ENCODE measurements at regions of chr14 and their contacts with region 1.

Region 1: DNA sequence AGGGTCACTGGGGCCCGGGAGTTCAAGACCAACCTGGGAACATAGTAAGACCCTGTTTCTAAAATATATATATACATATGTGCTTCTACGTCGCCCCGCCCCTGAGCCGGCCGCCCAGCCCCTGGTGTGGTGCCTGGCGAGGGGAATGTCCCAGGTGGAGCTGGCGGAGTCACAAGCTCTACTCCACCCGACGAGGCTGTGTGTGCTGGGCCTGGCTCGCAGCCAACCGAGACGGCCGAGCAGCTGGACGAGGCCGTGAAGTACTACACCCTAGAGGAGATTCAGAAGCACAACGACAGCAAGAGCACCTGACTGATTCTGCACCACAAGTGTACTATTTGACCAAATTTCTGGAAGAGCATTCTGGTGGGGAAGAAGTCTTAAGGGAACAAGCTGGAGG is 22.1 kb upstream of the ITPK1 start:
- DNase-seq: no peak
- H3K4me3 ChIP-seq: no peak overlapping the region
- H3K27ac ChIP-seq: no peak overlapping the region
- H3K4me1 ChIP-seq: no peaks in the 10 kb centered on the region
- H3K27me3 ChIP-seq: no peaks in the 10 kb centered on the region
- CTCF ChIP-seq: no peak
- POLR2A ChIP-seq: no peak

Region 2: DNA sequence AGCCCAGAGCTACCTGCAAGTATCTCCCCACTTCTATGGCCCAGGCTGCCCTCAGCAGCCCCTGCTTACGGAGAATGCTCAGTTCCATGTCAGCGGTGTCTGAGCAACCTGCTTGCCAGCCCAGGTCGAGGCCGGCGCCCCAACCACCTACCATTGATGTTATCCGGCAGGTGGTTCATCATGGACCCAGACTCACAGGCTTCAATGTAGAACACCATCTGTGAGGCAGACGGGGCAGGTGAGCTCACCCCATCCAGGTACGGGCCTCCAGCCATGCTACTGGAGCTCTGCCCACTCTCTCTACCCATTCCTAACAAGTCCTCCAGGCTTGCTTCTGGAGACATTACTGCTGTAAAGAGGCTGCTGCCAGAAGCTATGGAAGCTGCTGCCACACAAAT is 425.2 kb before region 1 on chr14:
- CTCF ChIA-PET with region 1: interaction called, 4 read pairs
- POLR2A ChIA-PET with region 1: no interaction called
- dilution Hi-C with region 1: no loop called
- intact Hi-C with region 1: loop called (anchors 2 kb)
- DNase-seq: no peak
- H3K4me3 ChIP-seq: no peak overlapping the region
- H3K27ac ChIP-seq: no peak overlapping the region
- H3K4me1 ChIP-seq: no peaks in the 10 kb centered on the region
- H3K27me3 ChIP-seq: no peaks in the 10 kb centered on the region
- CTCF ChIP-seq: no peak
- POLR2A ChIP-seq: no peak

Region 3: DNA sequence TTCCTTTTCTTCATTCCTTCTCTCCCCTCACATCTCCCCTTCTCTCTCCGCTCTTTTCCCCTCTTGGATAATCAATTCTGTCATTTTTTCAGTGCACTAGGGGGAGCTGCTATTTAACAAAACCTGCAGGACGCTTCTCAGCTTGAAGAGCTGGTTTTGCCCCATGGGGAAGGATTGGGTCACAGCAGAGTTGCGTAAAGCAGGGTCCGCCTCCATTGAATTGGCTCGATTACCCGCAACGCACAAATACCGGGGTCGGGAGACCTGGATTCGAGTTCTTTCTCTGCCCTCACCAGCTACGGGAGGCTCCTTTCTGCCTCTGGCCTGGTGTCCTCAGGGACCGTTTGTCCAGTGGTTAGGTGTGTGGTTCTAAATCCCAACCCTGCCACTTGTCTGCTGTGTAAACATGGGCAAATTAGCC is 257.0 kb before region 1 on chr14:
- CTCF ChIA-PET with region 1: interaction called, 9 read pairs
- POLR2A ChIA-PET with region 1: no interaction called
- dilution Hi-C with region 1: no loop called
- intact Hi-C with region 1: loop called (anchors 2 kb)
- DNase-seq: peak; percentile 20
- H3K4me3 ChIP-seq: no peak overlapping the region
- H3K27ac ChIP-seq: no peak overlapping the region
- H3K4me1 ChIP-seq: no peaks in the 10 kb centered on the region
- H3K27me3 ChIP-seq: peaks cover 0 to 6% of the 10 kb centered on the region in 2 experiments
- CTCF ChIP-seq: peak in 1 of 2 donors; percentile 10
- POLR2A ChIP-seq: no peak

Region 4: DNA sequence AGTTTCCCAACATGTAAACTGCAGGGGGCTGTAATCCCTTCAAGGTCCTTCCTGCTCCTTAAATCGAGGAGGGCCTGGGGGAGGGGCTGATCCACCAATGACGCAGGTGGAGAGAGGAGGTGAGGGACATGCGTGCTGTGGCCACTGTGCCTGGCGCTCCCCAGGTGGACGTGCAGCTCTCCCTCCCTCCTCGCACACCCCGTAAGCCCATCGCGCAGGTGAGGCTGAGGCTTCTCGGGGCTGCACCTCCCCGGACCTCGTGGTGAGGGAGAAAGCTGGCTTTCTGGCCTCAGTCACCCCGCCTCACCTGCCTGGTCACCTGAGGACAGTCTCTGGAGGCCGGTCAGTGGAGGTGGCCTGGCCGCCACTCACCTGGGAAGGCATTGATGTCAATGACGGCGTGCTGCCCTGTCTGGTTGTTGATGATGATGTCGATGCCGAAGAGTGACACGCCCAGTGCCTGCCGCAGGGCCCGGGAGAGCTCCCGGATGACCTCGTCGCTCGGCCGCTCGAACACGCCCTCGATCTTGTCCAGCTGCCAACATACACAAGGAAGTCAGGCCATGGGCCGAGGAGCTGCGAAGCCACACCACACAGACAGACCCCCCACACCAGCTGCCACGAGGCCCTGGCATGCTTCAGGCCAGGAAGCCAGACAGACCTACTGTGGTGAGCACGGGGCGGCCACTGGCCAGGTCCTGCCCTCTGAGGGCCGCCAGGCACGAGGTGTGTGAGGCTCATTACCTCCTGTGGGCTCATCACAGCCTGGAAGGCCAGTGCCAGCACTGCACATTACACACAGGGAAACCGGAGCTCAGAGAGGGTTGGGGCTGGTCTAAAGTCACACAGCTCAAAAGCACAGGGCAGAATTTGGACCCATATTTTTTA is 191.7 kb before region 1 on chr14:
- CTCF ChIA-PET with region 1: interaction called, 109 read pairs
- POLR2A ChIA-PET with region 1: no interaction called
- dilution Hi-C with region 1: loop called (anchors 25 kb)
- intact Hi-C with region 1: no loop called
- DNase-seq: peak; percentile 70
- H3K4me3 ChIP-seq: no peak overlapping the region
- H3K27ac ChIP-seq: no peak overlapping the region
- H3K4me1 ChIP-seq: peaks cover 5% of the 10 kb centered on the region
- H3K27me3 ChIP-seq: no peaks in the 10 kb centered on the region
- CTCF ChIP-seq: no peak
- POLR2A ChIP-seq: no peak

Region 5: GRCh38 chr14:92951912-92952471 is 185.9 kb before region 1 on chr14:
- CTCF ChIA-PET with region 1: interaction called, 109 read pairs
- POLR2A ChIA-PET with region 1: no interaction called
- dilution Hi-C with region 1: loop called (anchors 25 kb)
- intact Hi-C with region 1: loop called (anchors 1 kb)
- DNase-seq: peak; percentile 70
- H3K4me3 ChIP-seq: no peak overlapping the region
- H3K27ac ChIP-seq: no peak overlapping the region
- H3K4me1 ChIP-seq: no peaks in the 10 kb centered on the region
- H3K27me3 ChIP-seq: no peaks in the 10 kb centered on the region
- CTCF ChIP-seq: peak; percentile 86 to 96
- POLR2A ChIP-seq: no peak

Region 6: DNA sequence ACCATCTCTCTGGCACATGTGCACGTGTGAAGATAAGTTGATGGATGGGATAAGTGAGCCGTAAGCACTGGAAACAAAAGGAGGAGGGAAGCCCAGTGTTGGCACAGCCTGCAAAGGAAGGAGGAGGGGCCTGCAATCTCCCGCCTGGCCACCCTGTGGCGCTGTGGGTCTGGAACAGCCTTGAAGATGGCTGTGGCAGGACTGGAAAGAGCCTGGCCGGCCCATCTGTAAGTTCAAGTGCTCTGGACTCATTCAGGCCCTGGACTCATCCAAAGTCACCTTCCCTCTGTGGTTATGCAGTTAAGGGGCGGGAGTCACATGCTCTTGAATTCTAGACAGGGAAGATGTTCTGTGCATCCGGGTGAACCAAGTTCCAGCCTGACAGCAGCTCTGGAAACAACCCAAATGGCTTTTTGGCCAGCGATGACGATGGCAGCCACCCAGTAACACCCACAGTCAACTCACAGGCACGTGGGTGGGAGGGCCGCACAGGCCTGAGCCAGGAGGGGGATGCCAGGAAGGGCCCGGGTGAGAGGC is 164.5 kb before region 1 on chr14:
- CTCF ChIA-PET with region 1: interaction called, 4 read pairs
- POLR2A ChIA-PET with region 1: no interaction called
- dilution Hi-C with region 1: loop called (anchors 25 kb)
- intact Hi-C with region 1: loop called (anchors 1 kb)
- DNase-seq: peak; percentile 17
- H3K4me3 ChIP-seq: no peak overlapping the region
- H3K27ac ChIP-seq: no peak overlapping the region
- H3K4me1 ChIP-seq: no peaks in the 10 kb centered on the region
- H3K27me3 ChIP-seq: no peaks in the 10 kb centered on the region
- CTCF ChIP-seq: peak; percentile 50 to 55
- POLR2A ChIP-seq: no peak

Region 7: DNA sequence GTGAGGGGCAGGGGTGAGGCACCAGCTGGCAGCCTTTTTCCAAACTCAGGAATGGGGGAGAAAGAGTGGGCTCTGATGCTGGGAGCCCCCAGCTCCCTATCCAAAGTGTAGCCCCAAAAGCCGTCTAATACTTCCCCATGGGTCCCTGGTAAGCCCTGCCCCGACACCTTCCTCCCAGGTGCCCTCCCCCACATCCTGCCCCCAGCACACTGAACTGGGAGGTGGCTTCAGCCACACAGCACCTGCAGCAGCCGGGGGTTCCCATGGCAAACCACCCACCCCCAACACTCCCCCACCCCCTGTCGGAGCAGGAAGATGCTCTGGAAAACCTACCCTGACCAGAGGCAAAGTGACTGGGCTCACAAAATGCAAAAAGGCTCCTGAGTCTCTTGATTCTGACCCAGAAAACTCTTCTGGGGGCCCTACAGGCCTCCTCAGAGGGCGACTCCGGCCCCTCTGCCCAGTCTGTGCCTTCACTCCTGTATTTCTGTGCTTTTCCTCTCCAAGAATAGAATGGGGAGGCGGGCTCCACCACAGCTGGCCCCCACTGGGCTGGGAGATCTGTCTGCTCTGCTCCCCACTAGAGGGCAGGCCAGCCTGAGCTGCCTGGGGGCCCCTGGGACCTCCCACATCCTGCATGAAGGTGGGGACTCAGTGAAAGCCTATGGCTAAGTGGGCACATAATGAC is 103.7 kb before region 1 on chr14:
- CTCF ChIA-PET with region 1: interaction called, 9 read pairs
- POLR2A ChIA-PET with region 1: no interaction called
- dilution Hi-C with region 1: no loop called
- intact Hi-C with region 1: loop called (anchors 2 kb)
- DNase-seq: no peak
- H3K4me3 ChIP-seq: no peak overlapping the region
- H3K27ac ChIP-seq: no peak overlapping the region
- H3K4me1 ChIP-seq: peaks cover 17% of the 10 kb centered on the region
- H3K27me3 ChIP-seq: no peaks in the 10 kb centered on the region
- CTCF ChIP-seq: peak; percentile 36 to 60
- POLR2A ChIP-seq: no peak

Region 8: GRCh38 chr14:93788543-93789227 is 650.8 kb after region 1 on chr14:
- CTCF ChIA-PET with region 1: no interaction called
- POLR2A ChIA-PET with region 1: no interaction called
- dilution Hi-C with region 1: no loop called
- intact Hi-C with region 1: no loop called
- DNase-seq: no peak
- H3K4me3 ChIP-seq: no peak overlapping the region
- H3K27ac ChIP-seq: no peak overlapping the region
- H3K4me1 ChIP-seq: no peaks in the 10 kb centered on the region
- H3K27me3 ChIP-seq: peaks cover 5 to 6% of the 10 kb centered on the region in 2 experiments
- CTCF ChIP-seq: no peak
- POLR2A ChIP-seq: no peak

Measured in endothelial cell of umbilical vein (primary cell).